Caco-2 (cell line): ENCODE measurements at regions of chr6 and their contacts with region 1.

Region 1: DNA sequence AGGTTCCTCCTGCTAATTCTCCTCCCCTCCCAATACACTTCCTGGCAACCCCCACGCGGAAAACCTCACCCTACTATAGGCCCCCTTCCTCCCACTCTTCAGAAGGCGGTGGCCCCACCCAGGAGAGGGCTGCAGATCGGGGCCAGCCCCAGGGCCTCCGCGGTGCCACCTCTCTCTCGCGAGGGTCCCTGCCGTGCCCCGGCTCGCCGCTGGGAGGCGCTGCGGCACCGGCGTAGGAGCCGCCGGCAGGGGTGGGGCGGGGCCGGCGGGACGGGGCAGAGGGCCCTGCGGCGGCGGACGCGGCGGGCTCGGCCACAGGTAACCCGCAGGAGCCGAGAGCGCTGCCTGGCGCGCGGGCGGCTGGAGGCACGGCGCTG is at the start of gene ANKRD6:
- DNase-seq: peak; percentile 50 to 91
- H3K4me3 ChIP-seq: peak within 1 kb of the TSS; percentile 59
- H3K4me3 Mint-ChIP-seq: peak within 1 kb of the TSS; percentile 65
- H3K27ac Mint-ChIP-seq: no peak within 1 kb of the TSS
- H3K4me1 ChIP-seq: peaks cover under 1% of the 10 kb centered on the region; the same call in 1 of the 2 replicates
- H3K4me1 Mint-ChIP-seq: peaks cover 6% of the 10 kb centered on the region
- H3K27me3 ChIP-seq: no peaks in the 10 kb centered on the region
- H3K27me3 Mint-ChIP-seq: peaks cover 13% of the 10 kb centered on the region
- CTCF ChIP-seq: peak; percentile 72 to 83
- total RNA-seq, gene ANKRD6: 20.5 and 25.6 TPM in 2 replicates

Region 2: DNA sequence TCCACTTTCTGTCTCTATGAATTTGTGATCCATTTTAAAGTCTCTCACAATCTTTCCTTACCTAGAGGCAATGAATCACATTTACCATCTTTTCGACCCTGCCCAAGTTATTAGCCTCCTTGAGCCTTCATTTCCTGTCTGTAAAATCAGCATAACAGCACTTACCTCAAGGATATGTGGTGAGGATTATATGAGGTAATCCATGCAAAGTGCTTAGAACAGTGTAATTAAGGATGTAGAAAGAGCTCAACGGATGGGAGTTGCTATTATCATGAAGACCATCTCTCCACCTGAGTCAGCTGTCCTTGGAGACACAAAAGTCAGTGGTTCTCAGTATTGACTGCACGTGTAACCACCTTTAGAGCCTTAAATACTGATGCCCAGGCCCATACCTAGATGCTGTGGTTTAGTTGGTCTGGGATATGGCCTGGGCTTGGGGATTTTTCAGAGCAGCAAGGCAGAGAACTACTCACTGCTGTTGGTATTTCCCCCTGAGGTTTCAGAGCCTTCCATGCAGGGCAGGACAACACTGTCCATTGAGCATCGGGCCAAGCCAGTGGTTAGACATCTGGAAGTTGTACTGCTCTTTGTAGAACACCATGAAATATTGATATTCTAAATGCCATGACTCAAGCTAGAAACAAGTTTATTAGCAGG is 149.9 kb after region 1 on chr6:
- CTCF ChIA-PET with region 1: no interaction called
- POLR2A ChIA-PET with region 1: no interaction called
- intact Hi-C with region 1: no loop called
- DNase-seq: no peak
- H3K4me3 ChIP-seq: no peak overlapping the region
- H3K4me3 Mint-ChIP-seq: no peak overlapping the region
- H3K27ac Mint-ChIP-seq: no peak overlapping the region
- H3K4me1 ChIP-seq: no peaks in the 10 kb centered on the region
- H3K4me1 Mint-ChIP-seq: no peaks in the 10 kb centered on the region
- H3K27me3 ChIP-seq: no peaks in the 10 kb centered on the region
- H3K27me3 Mint-ChIP-seq: no peaks in the 10 kb centered on the region
- CTCF ChIP-seq: no peak

Region 3: DNA sequence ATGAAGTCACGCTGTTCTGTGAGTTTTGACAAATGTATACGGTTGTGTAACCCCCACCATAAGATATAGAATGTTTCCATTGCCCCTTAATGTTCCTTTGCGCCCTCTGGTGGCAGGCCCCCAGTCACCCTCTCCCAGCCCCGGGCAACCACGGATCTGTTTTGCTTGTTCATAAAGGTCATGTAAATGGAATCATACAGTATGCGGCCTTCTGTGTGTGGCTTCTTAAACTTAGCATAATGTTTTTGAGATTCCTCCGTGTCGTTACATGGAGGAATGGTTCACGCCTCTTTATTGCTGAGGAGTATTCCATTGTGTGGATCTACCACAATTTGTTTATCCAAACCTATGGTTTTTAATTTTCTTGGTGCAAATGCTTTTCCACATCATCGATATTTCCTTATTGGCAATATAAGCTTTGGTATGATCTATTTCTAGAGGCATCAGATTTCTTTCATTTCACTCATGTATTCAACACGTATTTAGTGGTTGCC is 177.3 kb after region 1 on chr6:
- CTCF ChIA-PET with region 1: interaction called, 6 read pairs
- POLR2A ChIA-PET with region 1: no interaction called
- intact Hi-C with region 1: loop called (anchors 1 kb)
- DNase-seq: peak; percentile 60 to 77
- H3K4me3 ChIP-seq: no peak overlapping the region
- H3K4me3 Mint-ChIP-seq: no peak overlapping the region
- H3K27ac Mint-ChIP-seq: no peak overlapping the region
- H3K4me1 ChIP-seq: no peaks in the 10 kb centered on the region
- H3K4me1 Mint-ChIP-seq: no peaks in the 10 kb centered on the region
- H3K27me3 ChIP-seq: no peaks in the 10 kb centered on the region
- H3K27me3 Mint-ChIP-seq: no peaks in the 10 kb centered on the region
- CTCF ChIP-seq: peak; percentile 84 to 92